Pancreas (tissue), 10 donors: ENCODE measurements at regions of chr4 and their contacts with region 1.

Region 1: GRCh38 chr4:89307446-89308160 is at the start of gene GPRIN3:
- DNase-seq: peak; percentile 56 to 86 (median 73)
- ATAC-seq: peak; percentile 77 to 83 (median 80)
- H3K4me3 ChIP-seq: peak within 1 kb of the TSS; percentile 77 to 87 (median 86)
- H3K27ac ChIP-seq: peak within 1 kb of the TSS; percentile 50 to 83 (median 67)
- H3K4me1 ChIP-seq: peaks cover 3 to 37% (median 28%) of the 10 kb centered on the region in 3 donors
- H3K27me3 ChIP-seq: no peaks in the 10 kb centered on the region
- CTCF ChIP-seq: no peak
- total RNA-seq, gene GPRIN3: 2.5 to 7.6 (median 3.5) TPM

Region 2: DNA sequence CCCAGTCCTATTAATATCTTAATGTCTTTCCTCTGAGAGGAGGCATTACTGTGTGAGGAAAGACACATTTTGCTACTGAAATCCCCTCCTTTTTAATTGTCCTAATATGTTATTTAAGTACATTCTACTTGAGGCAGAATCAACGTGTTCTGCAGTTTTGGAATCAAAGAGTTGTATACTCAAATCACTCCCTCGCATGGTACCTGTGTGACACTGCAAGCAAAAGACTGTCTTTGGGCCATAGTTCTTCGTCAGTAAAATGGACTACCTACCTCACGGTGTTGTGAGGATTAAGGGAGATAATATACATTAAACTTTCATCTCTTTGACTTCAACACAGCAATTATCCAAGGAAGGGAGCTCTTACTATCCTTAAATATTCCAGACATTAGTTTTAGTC is 134.7 kb before region 1 on chr4:
- intact Hi-C with region 1: no loop called
- DNase-seq: no peak
- ATAC-seq: no peak
- H3K4me3 ChIP-seq: no peak overlapping the region
- H3K27ac ChIP-seq: no peak overlapping the region
- H3K4me1 ChIP-seq: peaks cover 0 to 22% (median 10%) of the 10 kb centered on the region in 3 donors
- H3K27me3 ChIP-seq: no peaks in the 10 kb centered on the region
- CTCF ChIP-seq: no peak

Region 3: GRCh38 chr4:89254847-89255246 is 52.8 kb before region 1 on chr4:
- intact Hi-C with region 1: loop called in 1 of 3 experiments (anchors 10 kb)
- DNase-seq: peak in 4 of 6 donors; percentile 26 to 48 (median 35)
- ATAC-seq: peak; percentile 68 to 85 (median 78)
- H3K4me3 ChIP-seq: no peak overlapping the region
- H3K27ac ChIP-seq: no peak overlapping the region
- H3K4me1 ChIP-seq: peaks cover 8 to 13% (median 11%) of the 10 kb centered on the region in 3 donors
- H3K27me3 ChIP-seq: no peaks in the 10 kb centered on the region
- CTCF ChIP-seq: peak; percentile 46 to 72 (median 64)

Region 4: GRCh38 chr4:89410687-89411086 is 103.1 kb after region 1 on chr4:
- intact Hi-C with region 1: loop called in 1 of 3 experiments (anchors 5 kb)
- DNase-seq: no peak
- ATAC-seq: peak; percentile 19 to 42 (median 34)
- H3K4me3 ChIP-seq: no peak overlapping the region
- H3K27ac ChIP-seq: peak overlapping the region in 1 of 4 donors; percentile 14
- H3K4me1 ChIP-seq: peaks cover 0 to 19% (median 13%) of the 10 kb centered on the region in 3 donors
- H3K27me3 ChIP-seq: no peaks in the 10 kb centered on the region
- CTCF ChIP-seq: no peak